ENCODE measurements at regions of chr1 and their contacts with region 1.

Region 1: DNA sequence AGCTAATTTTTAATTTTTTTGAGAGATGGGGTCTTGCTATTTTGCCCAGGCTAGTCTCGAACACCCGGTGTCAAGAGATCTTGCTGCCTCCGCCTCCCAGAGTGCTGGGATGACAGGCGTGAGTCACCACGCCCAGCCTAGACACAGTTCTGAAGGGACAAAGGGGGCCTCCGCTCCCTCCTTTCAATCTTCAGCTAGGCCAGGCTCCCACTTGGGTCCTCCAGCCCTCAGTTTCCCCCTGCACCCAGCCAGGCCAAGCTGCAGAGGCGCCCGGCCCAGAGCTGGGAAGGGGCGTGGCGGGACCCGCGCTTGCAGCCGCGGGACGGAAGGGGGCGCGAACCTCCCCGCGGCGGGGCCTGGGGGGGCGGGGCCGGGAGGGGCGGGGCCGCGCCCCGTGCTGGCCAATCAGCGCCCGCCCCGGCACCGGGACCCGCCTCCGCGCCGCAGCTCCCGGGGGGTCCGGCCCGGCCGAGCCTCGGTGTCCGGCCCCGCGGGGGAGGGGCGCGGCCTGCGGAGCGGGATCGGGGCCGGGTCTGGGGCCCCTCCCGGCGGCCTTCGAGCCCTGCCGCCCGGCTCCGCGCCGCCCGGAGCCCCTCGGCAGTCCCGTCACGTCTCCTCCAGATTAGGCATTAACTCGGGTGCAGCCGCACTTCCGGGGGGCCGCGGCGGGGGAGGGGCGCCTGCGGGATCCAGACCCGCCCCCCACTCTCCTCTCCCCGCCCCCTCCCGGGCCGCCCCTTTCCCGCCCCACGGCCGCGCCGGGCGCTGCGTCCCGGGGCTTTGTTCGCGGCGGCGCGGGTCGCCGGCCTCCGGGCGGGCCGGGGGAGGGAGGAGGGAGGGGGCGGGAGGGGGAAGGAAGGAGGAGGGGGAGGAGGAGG is 559 bp upstream of the AGRN start:
- DNase-seq: peak; percentile 89

Region 2: DNA sequence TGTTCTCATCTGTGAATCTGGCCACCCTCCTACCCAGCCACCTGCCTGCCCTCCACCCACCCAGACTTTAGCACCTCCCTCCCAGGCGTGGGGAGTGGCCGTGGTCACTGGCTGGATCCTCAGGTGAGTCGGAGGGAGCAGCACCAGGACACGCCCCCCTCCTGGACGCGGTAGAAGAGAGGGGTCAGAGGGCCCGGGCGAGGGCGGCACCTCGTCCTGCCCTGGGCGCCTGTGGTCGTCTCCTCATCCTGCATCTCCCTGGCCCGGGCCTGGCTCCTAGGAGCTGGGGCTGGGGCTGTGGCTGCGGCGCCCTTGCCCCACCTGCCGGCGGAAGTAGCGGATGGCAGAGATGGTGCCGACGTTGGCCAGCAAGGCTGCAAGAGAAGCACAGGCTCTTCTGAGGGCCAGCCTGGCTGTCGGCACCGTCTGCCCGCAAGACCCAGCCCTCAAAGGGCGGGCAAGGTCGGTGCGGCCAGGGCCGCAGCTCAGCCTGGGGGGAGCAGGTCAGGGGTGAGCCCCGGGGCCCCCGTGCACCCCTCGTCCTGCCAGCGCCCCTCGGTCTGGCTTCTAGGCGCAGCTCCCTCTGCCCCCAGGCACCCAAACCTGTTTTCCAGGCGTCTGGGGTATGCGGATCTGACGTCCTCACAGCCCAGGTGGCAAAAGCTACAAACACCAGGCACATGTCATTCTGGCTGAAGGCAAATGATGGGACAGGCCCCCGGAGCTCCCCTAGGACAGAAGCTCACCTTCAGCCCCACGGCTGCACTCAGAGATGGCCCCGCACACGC is 43.3 kb before region 1 on chr1:
- intact Hi-C with region 1: no loop called
- DNase-seq: no peak

Region 3: GRCh38 chr1:999725-1000356 is 19.5 kb before region 1 on chr1 and contains the start of gene HES4:
- intact Hi-C with region 1: loop called (anchors 2 kb)
- DNase-seq: peak; percentile 94
- total RNA-seq, gene HES4: 56.5 TPM

Region 4: GRCh38 chr1:1059494-1060280 is 40.3 kb after region 1 on chr1:
- intact Hi-C with region 1: loop called (anchors 10 kb)
- DNase-seq: peak; percentile 87

Region 5: GRCh38 chr1:1115786-1116700 is 96.7 kb after region 1 on chr1 and contains the start of gene C1orf159:
- intact Hi-C with region 1: loop called (anchors 5 kb)
- DNase-seq: peak; percentile 99
- total RNA-seq, gene C1orf159: 5.4 TPM